ENCODE measurements at regions of chr2 and their contacts with region 1.

Region 1: DNA sequence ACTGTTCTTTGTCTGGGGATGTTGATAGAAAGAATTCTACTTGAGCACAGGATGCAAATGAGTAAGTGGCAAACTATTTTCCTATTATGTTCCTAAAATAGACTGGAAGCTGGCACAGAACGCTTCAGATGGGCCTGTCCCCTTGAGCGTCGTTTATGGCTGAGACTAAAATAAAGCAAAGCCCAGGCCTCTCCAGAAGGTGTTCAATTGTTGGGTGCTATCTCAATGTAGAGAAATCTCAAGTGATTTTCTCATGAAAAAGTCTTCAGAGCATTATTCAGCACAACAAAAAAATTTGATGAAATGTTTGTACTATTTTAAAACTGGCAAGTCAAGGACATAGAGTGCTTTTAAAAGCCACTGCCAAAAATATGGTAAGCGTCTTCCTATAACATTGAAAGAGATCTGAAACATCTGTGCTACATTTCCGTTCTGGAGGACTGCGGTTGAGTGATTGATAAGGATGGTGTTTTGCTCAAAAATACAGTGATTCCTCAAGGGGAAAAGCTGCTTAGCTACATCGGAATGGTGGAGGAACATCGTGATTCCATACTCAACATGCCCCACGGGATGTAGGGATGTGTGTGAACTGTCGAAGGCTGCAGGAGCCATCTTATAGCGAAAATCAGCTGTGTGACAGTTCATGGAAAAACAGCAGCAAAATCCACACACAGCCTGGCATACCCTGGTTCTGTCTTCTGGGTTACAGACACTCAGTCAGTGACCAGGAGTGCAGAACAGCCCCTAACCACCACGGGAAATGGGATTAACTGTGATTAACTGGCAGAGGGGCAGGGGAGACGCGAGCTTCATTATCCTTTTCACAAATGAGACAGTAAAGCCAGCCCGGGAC is 10.4 kb upstream of the LRRFIP1 start:
- DNase-seq: peak in 1 of 14 experiments; percentile 28
- ATAC-seq: peak; percentile 87
- H3K4me3 ChIP-seq: no peak overlapping the region
- H3K4me3 Mint-ChIP-seq: peak overlapping the region; percentile 26
- H3K27ac ChIP-seq: no peak overlapping the region
- H3K27ac Mint-ChIP-seq: peak overlapping the region; percentile 21
- H3K4me1 ChIP-seq: peaks cover 20% of the 10 kb centered on the region
- H3K4me1 Mint-ChIP-seq: peaks cover 53% of the 10 kb centered on the region
- H3K27me3 ChIP-seq: no peaks in the 10 kb centered on the region
- H3K27me3 Mint-ChIP-seq: no peaks in the 10 kb centered on the region
- CTCF ChIP-seq: no peak

Region 2: DNA sequence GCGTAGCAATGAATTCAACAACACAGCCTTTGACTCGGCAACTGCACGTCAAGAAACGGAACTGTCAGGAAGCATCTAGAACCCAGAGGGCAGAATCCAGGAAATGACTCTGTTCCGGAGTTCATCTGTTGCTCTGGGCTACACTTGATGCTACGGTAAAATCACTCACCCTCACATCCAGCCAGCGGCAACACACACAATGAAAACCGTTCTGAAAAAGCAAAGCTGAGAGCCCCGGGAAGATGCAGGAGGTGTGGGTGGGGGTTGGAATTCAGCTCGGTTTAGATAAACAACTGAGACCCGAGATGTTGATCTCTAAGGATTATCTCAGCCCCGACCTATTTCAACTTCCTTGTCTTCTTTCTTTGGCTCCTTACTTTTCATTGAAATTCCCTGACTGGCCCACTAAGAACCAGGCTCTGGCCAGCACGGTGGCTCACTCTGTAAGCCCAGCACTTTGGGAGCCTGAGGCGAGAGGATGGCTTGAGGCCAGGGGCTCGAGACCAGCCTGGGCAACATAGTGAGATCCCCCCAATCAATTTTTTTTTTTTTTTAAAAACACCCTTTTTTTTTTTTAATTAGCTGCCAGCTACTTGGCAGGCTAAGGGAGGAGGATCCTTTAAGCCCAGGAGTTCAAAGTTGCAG is 13.1 kb before region 1 on chr2:
- CTCF ChIA-PET with region 1: interaction called, 3 read pairs
- POLR2A ChIA-PET with region 1: interaction called, 10 read pairs
- intact Hi-C with region 1: no loop called
- DNase-seq: peak; percentile 35 to 87 (median 56)
- ATAC-seq: peak; percentile 97
- H3K4me3 ChIP-seq: peak overlapping the region; percentile 22
- H3K4me3 Mint-ChIP-seq: peak overlapping the region; percentile 81
- H3K27ac ChIP-seq: peak overlapping the region; percentile 24 to 87
- H3K27ac Mint-ChIP-seq: peak overlapping the region; percentile 89
- H3K4me1 ChIP-seq: peaks cover 24% of the 10 kb centered on the region
- H3K4me1 Mint-ChIP-seq: peaks cover 28% of the 10 kb centered on the region
- H3K27me3 ChIP-seq: no peaks in the 10 kb centered on the region
- H3K27me3 Mint-ChIP-seq: no peaks in the 10 kb centered on the region
- CTCF ChIP-seq: no peak

Measured in CD4-positive, alpha-beta T cell (primary cell).